ENCODE measurements at regions of chr10 and their contacts with region 1.

Region 1: DNA sequence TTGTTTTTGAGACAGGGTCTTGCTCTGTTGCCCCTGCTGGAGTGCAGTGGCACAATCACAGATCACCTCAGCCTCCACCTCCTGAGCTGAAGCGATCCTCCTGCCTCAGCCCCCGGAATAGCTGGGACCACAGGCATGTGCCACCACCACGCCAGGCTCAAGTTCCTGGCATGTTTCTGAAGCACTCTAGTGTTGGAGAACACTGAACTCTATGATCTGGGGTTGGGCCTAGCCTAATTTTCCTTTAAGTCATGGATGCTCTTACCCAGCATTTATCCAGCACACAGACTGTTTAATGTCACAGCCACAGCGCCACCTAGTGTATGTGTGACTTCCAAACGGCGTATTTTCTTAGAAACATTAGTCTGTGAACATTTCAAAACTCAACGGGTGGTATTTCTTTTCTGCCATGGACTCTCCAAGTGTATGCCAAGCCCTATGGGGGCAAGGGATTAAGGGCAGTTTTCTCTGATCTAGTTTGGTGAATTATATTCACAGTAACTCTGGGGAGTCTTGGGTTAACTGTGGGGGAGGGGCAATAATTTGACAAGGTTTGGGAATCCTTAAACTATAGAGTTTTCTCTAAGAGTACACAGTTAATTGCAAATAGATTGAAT is 91.8 kb downstream of the CREM start:
- DNase-seq: peak; percentile 91
- H3K4me3 Mint-ChIP-seq: no peak overlapping the region
- H3K27ac Mint-ChIP-seq: no peak overlapping the region
- H3K4me1 Mint-ChIP-seq: no peaks in the 10 kb centered on the region
- H3K27me3 Mint-ChIP-seq: no peaks in the 10 kb centered on the region
- CTCF ChIP-seq: peak; percentile 63

Region 2: GRCh38 chr10:34655286-34656170 is 562.9 kb before region 1 on chr10:
- CTCF ChIA-PET with region 1: interaction called, 3 read pairs
- POLR2A ChIA-PET with region 1: no interaction called
- intact Hi-C with region 1: loop called (anchors 5 kb)
- DNase-seq: peak; percentile 69
- H3K4me3 Mint-ChIP-seq: no peak overlapping the region
- H3K27ac Mint-ChIP-seq: no peak overlapping the region
- H3K4me1 Mint-ChIP-seq: peaks cover 18% of the 10 kb centered on the region
- H3K27me3 Mint-ChIP-seq: no peaks in the 10 kb centered on the region
- CTCF ChIP-seq: peak; percentile 79

Region 3: GRCh38 chr10:35119378-35119777 is 99.1 kb before region 1 on chr10:
- CTCF ChIA-PET with region 1: interaction called, 90 read pairs
- POLR2A ChIA-PET with region 1: interaction called, 3 read pairs
- intact Hi-C with region 1: loop called (anchors 1 kb)
- DNase-seq: no peak
- H3K4me3 Mint-ChIP-seq: no peak overlapping the region
- H3K27ac Mint-ChIP-seq: no peak overlapping the region
- H3K4me1 Mint-ChIP-seq: peaks cover 1% of the 10 kb centered on the region
- H3K27me3 Mint-ChIP-seq: peaks cover 12% of the 10 kb centered on the region
- CTCF ChIP-seq: no peak

Region 4: DNA sequence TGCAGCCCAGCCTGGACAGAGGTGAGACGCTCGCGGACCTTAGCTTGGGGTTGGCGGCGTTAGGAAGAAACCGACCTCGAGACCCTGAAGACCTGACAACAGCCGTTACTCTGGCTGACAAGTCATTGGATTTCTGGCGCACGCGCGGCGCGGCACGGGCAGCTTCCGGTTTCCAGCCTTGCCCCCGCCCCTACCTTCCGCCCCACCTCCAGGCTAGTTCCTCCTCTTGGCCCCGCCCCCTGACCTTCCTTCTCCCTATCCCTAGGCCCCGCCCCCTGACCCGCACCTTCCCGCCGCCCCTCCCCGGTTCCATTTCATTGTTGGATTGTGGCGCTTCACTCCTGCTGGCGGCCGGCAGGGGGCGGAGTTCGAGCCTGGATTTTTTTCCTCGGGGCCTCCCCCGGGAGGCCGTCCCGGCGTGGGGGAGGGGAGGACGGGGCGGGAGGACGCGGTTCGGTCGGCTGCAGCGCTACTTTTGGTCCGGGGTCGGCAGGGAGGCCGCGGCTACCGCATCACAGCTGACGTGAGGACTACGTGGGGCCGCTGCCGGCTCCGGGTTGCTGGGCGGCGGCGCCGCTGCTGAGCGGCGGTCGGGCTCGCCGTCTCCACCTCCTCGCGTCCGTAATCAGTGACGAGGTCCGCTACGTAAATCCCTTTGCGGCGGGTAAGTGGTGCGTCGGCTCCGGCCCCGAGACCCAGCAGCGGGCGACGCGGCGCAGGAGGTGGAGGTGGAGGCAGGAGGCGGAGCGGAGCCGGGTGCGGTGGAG is 91.7 kb before region 1 on chr10 and contains the start of gene CREM:
- CTCF ChIA-PET with region 1: interaction called, 90 read pairs
- POLR2A ChIA-PET with region 1: interaction called, 7 read pairs
- intact Hi-C with region 1: loop called (anchors 1 kb)
- DNase-seq: peak; percentile 98
- H3K4me3 Mint-ChIP-seq: peak within 1 kb of the TSS; percentile 82
- H3K27ac Mint-ChIP-seq: peak within 1 kb of the TSS; percentile 97
- H3K4me1 Mint-ChIP-seq: peaks cover 6% of the 10 kb centered on the region
- H3K27me3 Mint-ChIP-seq: no peaks in the 10 kb centered on the region
- CTCF ChIP-seq: peak; percentile 86
- total RNA-seq, gene CREM: 30.2 and 31.3 TPM in 2 replicates

Region 5: DNA sequence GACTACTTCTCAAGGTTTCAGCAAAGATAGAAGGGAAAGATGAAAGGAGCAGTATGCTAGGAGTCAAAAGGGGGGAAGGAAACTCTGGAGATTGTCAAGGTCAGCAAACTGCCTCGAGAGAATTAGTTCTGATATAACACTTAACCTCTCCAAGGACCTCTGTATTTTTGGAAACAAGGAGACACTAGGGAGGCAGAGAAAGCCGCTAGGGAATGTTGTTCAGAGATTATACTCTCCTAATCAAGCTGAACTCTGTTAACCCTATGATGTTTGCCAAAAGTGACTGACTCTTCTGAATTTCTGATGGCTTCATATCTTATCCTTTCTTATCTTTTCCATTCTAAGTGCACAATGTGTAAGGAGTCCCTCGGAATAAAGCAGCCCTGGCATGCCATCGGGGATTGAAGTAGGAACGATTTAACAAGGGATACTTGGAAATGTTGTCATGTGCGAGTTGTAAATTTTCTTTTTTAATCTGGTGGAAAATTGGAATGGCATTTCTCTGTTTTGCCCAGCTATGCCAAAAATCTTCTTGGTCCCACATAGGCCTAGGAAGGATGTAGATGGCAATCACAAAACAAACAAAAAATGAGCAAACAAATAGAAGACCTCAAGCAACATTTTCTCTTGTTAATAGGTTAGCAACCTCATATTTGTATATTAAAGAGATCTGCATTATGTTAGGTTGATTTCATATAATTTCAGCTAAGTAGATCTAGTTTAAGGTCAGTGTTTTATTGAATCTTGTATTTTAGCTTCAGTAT is 64.5 kb before region 1 on chr10:
- CTCF ChIA-PET with region 1: no interaction called
- POLR2A ChIA-PET with region 1: no interaction called
- intact Hi-C with region 1: no loop called
- DNase-seq: no peak
- H3K4me3 Mint-ChIP-seq: no peak overlapping the region
- H3K27ac Mint-ChIP-seq: no peak overlapping the region
- H3K4me1 Mint-ChIP-seq: peaks cover 5% of the 10 kb centered on the region
- H3K27me3 Mint-ChIP-seq: no peaks in the 10 kb centered on the region
- CTCF ChIP-seq: no peak

Measured in MCF 10A (cell line).